Activated CD4-positive, alpha-beta T cell treated with anti-CD3 and anti-CD28 coated beads for 36 hours (primary cell): ENCODE measurements at regions of chr6 and their contacts with region 1.

Region 1: GRCh38 chr6:142207265-142207877 is 60.3 kb downstream of the VTA1 start:
- DNase-seq: peak; percentile 62
- ATAC-seq: peak; percentile 53
- H3K4me3 Mint-ChIP-seq: no peak overlapping the region
- H3K27ac Mint-ChIP-seq: no peak overlapping the region
- H3K4me1 Mint-ChIP-seq: no peaks in the 10 kb centered on the region
- H3K27me3 Mint-ChIP-seq: no peaks in the 10 kb centered on the region

Region 2: GRCh38 chr6:141618180-141618581 is 589.2 kb before region 1 on chr6:
- CTCF ChIA-PET with region 1: no interaction called
- POLR2A ChIA-PET with region 1: no interaction called
- intact Hi-C with region 1: no loop called
- DNase-seq: no peak
- ATAC-seq: no peak
- H3K4me3 Mint-ChIP-seq: no peak overlapping the region
- H3K27ac Mint-ChIP-seq: no peak overlapping the region
- H3K4me1 Mint-ChIP-seq: no peaks in the 10 kb centered on the region
- H3K27me3 Mint-ChIP-seq: no peaks in the 10 kb centered on the region

Region 3: DNA sequence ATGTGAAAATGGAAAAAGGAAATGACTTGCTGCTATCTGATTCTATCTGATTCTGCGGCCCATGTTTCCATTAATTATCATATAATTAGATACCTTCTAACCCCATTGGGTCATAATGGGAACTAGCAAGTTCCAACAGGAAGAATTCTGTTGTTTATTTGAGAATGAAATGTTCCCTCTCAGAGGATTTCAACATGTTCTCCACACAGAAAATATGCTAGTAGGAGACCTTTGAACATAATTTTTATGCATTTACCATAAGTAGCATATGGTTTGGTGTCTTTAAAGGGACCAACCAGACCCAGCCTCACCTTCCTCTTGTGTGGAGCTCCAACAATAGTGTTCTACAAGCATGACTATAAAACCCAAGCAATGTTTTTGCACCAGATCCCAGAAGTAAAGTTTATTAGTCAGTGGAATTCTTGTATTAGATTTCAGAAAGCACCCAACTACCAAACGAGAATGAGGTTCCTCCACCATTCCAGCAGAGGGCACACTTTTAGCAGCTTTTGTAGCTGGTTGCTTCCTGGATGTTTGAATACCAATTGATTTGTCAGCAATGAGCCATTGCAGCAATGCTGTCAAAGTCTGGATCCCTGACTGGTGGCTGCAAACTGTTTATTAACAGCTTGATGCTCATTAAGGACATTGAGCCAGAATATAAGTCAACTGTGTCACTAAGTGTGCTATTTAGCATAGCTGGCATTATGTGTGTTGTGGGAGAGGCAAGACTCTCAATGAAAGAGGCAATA is 218.2 kb before region 1 on chr6:
- CTCF ChIA-PET with region 1: interaction called, 13 read pairs
- POLR2A ChIA-PET with region 1: no interaction called
- intact Hi-C with region 1: loop called (anchors 1 to 2 kb)
- DNase-seq: peak; percentile 50
- ATAC-seq: peak; percentile 57
- H3K4me3 Mint-ChIP-seq: no peak overlapping the region
- H3K27ac Mint-ChIP-seq: no peak overlapping the region
- H3K4me1 Mint-ChIP-seq: no peaks in the 10 kb centered on the region
- H3K27me3 Mint-ChIP-seq: peaks cover 2% of the 10 kb centered on the region

Region 4: DNA sequence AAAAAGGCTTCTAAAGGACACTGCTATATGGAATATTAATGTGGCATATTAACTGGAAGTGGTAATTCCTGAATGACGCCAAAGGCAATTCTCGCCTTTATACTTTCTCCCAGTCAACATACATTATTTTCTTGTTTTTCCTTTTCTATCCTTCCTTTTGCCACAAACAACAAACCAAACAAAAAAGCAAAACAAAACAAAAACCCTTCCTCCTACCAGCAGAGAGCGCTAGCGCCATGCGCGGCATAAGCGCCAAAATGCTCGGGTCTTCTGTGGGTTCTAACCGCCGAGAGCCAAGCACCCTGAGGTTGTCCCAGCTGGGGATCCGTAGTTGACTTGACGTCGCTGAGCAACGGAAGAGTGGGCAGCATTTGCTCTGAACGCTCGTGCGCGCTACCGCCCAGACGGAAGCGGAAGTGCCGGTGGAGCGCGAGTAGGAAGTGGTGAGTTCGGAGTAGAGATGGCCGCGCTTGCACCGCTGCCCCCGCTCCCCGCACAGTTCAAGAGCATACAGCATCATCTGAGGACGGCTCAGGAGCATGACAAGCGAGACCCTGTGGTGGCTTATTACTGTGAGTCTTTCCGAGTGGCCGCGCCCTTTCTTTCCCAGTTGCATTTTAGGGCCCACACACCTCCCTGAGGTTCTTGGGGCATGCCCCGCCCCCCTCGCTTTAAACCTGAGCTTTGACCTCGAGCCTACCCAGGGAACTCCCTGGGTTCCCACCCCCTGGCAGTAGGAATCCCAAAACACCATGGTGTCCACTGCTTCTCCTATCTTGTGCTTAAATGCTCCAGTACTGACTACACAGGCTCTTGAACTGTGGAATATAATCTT is 60.3 kb before region 1 on chr6 and contains the starts of genes NMBR and VTA1:
- CTCF ChIA-PET with region 1: interaction called, 36 read pairs
- POLR2A ChIA-PET with region 1: no interaction called
- intact Hi-C with region 1: loop called (anchors 1 kb)
- DNase-seq: peak; percentile 98
- ATAC-seq: peak; percentile 98
- H3K4me3 Mint-ChIP-seq: peak within 1 kb of the TSS; percentile 97
- H3K27ac Mint-ChIP-seq: peak within 1 kb of the TSS; percentile 95
- H3K4me1 Mint-ChIP-seq: peaks cover 56% of the 10 kb centered on the region
- H3K27me3 Mint-ChIP-seq: no peaks in the 10 kb centered on the region
- total RNA-seq, gene NMBR: not detected
- total RNA-seq, gene VTA1: 55.6 to 73.9 TPM

Region 5: GRCh38 chr6:142155895-142156757 is 51.2 kb before region 1 on chr6:
- CTCF ChIA-PET with region 1: interaction called, 36 read pairs
- POLR2A ChIA-PET with region 1: no interaction called
- intact Hi-C with region 1: loop called (anchors 2 kb)
- DNase-seq: no peak
- ATAC-seq: peak; percentile 55
- H3K4me3 Mint-ChIP-seq: no peak overlapping the region
- H3K27ac Mint-ChIP-seq: peak overlapping the region; percentile 37
- H3K4me1 Mint-ChIP-seq: peaks cover 56% of the 10 kb centered on the region
- H3K27me3 Mint-ChIP-seq: no peaks in the 10 kb centered on the region

Region 6: DNA sequence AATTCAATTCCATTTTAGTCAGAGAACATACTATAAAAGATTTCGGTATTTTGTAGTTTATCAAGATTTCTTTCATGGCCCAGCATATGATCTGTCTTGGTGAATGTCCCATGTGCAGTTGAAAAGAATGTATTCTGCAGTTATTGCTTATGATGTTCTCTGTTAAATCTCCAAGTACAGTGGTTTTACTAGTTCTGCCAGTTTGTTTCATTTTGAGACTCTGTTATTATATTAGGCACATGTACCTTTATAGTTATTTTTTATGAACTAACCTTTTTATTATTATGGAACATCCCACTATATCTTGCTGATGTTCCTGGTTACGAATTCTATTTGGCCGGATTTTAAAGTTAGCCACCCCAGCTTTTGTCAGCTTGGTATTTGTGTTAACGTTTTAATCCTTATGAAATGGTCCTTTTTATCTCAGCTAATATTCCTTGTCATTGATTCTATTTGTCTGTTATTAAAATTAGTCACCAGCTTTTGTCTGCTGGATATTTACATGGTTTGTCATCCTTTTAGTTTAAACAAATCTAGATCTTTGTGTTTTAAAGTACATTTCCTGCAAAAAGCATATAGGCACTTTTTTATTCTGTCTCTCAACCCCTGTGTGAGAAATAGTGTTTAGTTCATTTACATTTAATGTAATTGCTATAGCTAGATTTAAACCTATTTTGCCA is 11.4 kb before region 1 on chr6:
- CTCF ChIA-PET with region 1: interaction called, 26 read pairs
- POLR2A ChIA-PET with region 1: no interaction called
- intact Hi-C with region 1: no loop called
- DNase-seq: no peak
- ATAC-seq: no peak
- H3K4me3 Mint-ChIP-seq: no peak overlapping the region
- H3K27ac Mint-ChIP-seq: no peak overlapping the region
- H3K4me1 Mint-ChIP-seq: peaks cover 37% of the 10 kb centered on the region
- H3K27me3 Mint-ChIP-seq: no peaks in the 10 kb centered on the region

Region 7: DNA sequence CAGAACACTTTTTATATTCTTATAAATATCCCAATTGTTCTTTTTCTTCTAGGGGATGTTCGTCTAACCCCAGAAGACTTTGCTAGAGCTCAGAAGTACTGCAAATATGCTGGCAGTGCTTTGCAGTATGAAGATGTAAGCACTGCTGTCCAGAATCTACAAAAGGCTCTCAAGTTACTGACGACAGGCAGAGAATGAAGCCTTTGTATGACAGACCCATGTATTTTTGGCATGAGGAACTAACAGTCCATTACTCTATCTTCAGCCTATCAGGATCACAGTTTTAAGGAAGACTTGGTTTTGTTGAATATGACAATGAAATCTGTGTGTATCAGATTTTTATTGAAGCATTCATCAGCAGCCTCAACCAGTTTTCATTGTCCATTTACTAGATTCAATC is 11.1 kb after region 1 on chr6:
- CTCF ChIA-PET with region 1: interaction called, 15 read pairs
- POLR2A ChIA-PET with region 1: no interaction called
- intact Hi-C with region 1: no loop called
- DNase-seq: no peak
- ATAC-seq: no peak
- H3K4me3 Mint-ChIP-seq: no peak overlapping the region
- H3K27ac Mint-ChIP-seq: no peak overlapping the region
- H3K4me1 Mint-ChIP-seq: no peaks in the 10 kb centered on the region
- H3K27me3 Mint-ChIP-seq: no peaks in the 10 kb centered on the region

Region 8: DNA sequence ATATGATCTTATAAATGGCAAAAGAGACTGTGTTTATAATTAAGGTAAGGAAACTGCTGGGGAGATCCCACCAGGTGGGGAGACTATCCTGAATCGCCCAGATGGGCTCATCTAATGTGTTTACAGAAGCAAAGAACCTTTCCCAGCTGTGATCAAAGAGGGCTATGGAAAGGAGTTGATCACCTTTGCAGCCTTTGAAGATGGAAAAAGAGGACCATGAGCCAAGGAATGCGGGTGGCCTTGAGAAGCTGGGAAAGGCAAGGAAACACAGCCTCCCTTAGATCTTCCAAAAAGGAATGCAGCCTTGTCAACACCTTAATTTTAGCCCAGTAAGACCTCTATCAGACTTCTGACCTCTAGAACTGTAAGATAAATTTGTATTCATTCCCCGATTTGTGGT is 27.9 kb after region 1 on chr6:
- CTCF ChIA-PET with region 1: no interaction called
- POLR2A ChIA-PET with region 1: no interaction called
- intact Hi-C with region 1: no loop called
- DNase-seq: no peak
- ATAC-seq: no peak
- H3K4me3 Mint-ChIP-seq: no peak overlapping the region
- H3K27ac Mint-ChIP-seq: no peak overlapping the region
- H3K4me1 Mint-ChIP-seq: peaks cover 2% of the 10 kb centered on the region
- H3K27me3 Mint-ChIP-seq: no peaks in the 10 kb centered on the region